Posterior cingulate gyrus (tissue), 11 donors: ENCODE measurements at regions of chr7 and their contacts with region 1.

Region 1: GRCh38 chr7:29189743-29190201 is 4.8 kb upstream of the CHN2 start:
- DNase-seq: peak; percentile 49 to 94 (median 72)

Region 2: DNA sequence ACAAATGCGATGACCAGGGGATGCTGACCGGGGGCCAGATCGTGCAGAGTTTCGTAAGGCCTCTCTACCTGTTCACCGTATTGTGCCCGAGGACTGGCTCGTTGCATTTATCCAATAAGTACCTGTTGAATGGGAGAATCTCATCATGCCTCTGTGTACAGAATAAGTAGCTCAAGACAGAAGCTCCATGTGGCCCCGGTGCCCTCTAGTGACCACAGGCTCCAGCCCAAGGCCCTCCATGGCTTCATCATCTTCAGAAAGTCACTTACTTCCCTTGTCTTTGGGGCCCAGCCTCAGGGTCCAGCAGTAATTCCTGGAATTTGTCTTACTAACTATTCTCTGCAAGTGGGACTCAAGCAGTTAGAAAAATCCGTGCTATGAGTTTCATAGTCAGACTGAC is 155.8 kb after region 1 on chr7:
- intact Hi-C with region 1: loop called (anchors 2 kb)
- DNase-seq: peak; percentile 35 to 96 (median 68)

Region 3: DNA sequence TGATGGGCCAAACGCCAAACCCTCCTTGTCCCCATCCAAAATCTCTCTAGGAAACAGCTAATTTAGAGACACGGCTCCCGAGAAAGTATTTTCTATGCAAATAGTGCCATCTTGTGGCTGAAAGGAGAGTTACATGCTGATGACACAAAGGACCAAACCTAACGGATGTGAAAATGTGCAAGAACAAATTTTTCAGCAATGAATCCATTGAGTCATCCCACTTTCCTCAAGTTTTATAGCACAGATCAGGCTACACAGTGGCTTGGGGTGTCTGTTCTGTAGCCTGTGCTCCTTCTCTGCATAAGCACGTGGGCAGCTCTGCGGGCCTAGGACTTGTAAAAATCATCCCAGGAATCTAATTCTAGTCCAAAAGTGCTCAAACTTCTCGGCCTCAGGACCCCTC is 219.1 kb after region 1 on chr7:
- intact Hi-C with region 1: loop called (anchors 2 kb)
- DNase-seq: peak in 3 of 10 donors; percentile 37 to 55 (median 54)